ENCODE measurements at regions of chr6 and their contacts with region 1.

Region 1: DNA sequence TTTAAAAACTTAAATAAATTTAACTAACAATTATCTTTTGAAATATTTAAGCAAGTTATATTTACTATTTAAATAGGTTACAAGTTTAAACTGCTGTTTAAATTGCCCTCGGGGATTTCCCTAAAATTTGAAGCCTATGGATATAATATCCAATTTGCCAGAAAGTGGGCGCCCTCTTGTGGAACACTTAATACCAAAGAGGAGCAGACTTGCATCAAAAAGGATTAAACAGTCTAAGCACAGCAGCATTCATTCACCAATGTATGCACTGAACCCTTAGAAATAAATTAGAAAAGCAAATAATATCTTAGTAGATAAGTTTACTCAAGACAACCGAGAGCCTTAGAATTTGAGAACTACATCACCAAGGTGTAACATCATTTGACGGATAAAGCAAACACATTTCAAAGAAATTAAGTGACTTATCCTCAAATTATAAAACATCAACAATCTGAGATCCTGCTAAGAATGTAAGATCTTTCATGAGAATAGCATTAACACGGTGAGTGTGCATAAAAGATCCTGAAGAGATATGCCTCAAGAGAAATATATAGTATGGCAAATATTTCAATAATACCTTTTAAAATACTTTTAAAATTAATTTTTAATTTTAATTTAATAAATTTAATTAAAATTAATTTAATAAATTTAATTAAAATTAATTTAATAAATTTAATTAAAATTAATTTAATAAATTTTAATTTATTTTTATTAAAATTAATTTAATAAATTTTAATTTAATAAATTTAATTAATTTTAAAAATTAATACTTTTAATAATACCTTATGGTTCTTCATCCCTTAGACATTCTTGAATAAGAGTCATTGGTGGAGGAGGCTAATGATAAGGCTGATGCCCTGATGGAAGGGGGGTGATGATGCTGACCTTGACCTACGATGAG is 11.5 kb upstream of the MEP1A start:
- DNase-seq: no peak
- ATAC-seq: no peak

Region 2: GRCh38 chr6:46704562-46704961 is 77.2 kb before region 1 on chr6:
- intact Hi-C with region 1: loop called (anchors 10 kb)
- DNase-seq: no peak
- ATAC-seq: no peak

Measured in Right ventricle myocardium inferior (tissue), 1 donor.